ENCODE measurements at regions of chr14 and their contacts with region 1.

Region 1: GRCh38 chr14:39376667-39377403 is 55.4 kb downstream of the FBXO33 start:
- DNase-seq: peak; percentile 32
- H3K4me3 ChIP-seq: no peak overlapping the region
- H3K27ac ChIP-seq: peak overlapping the region; percentile 13
- H3K4me1 ChIP-seq: peaks cover 28% of the 10 kb centered on the region
- H3K27me3 ChIP-seq: no peaks in the 10 kb centered on the region
- CTCF ChIP-seq: no peak

Region 2: GRCh38 chr14:39034481-39035296 is 342.1 kb before region 1 on chr14:
- CTCF ChIA-PET with region 1: no interaction called
- POLR2A ChIA-PET with region 1: no interaction called
- intact Hi-C with region 1: loop called (anchors 10 kb)
- DNase-seq: peak; percentile 61
- H3K4me3 ChIP-seq: no peak overlapping the region
- H3K27ac ChIP-seq: no peak overlapping the region
- H3K4me1 ChIP-seq: no peaks in the 10 kb centered on the region
- H3K27me3 ChIP-seq: no peaks in the 10 kb centered on the region
- CTCF ChIP-seq: peak; percentile 75

Region 3: GRCh38 chr14:39122330-39123138 is 254.3 kb before region 1 on chr14:
- CTCF ChIA-PET with region 1: no interaction called
- POLR2A ChIA-PET with region 1: no interaction called
- intact Hi-C with region 1: no loop called
- DNase-seq: no peak
- H3K4me3 ChIP-seq: no peak overlapping the region
- H3K27ac ChIP-seq: no peak overlapping the region
- H3K4me1 ChIP-seq: no peaks in the 10 kb centered on the region
- H3K27me3 ChIP-seq: no peaks in the 10 kb centered on the region
- CTCF ChIP-seq: no peak

Region 4: GRCh38 chr14:40248671-40249070 is 871.8 kb after region 1 on chr14:
- CTCF ChIA-PET with region 1: no interaction called
- POLR2A ChIA-PET with region 1: no interaction called
- intact Hi-C with region 1: no loop called
- DNase-seq: no peak
- H3K4me3 ChIP-seq: no peak overlapping the region
- H3K27ac ChIP-seq: no peak overlapping the region
- H3K4me1 ChIP-seq: no peaks in the 10 kb centered on the region
- H3K27me3 ChIP-seq: no peaks in the 10 kb centered on the region
- CTCF ChIP-seq: no peak